ENCODE measurements at regions of chr19 and their contacts with region 1.

Region 1: GRCh38 chr19:47514869-47515588 is at the start of gene NAPA:
- DNase-seq: peak; percentile 100
- ATAC-seq: peak; percentile 92 to 96 (median 94)
- H3K4me3 ChIP-seq: peak within 1 kb of the TSS; percentile 95
- H3K27ac ChIP-seq: peak within 1 kb of the TSS; percentile 99
- H3K4me1 ChIP-seq: peaks cover 36% of the 10 kb centered on the region
- H3K27me3 ChIP-seq: no peaks in the 10 kb centered on the region
- CTCF ChIP-seq: no peak
- total RNA-seq, gene NAPA: 124 to 182 (median 159) TPM

Region 2: GRCh38 chr19:47391510-47392223 is 123.4 kb before region 1 on chr19:
- intact Hi-C with region 1: no loop called
- DNase-seq: peak; percentile 73 to 81
- ATAC-seq: peak; percentile 67 to 71 (median 68)
- H3K4me3 ChIP-seq: no peak overlapping the region
- H3K27ac ChIP-seq: no peak overlapping the region
- H3K4me1 ChIP-seq: no peaks in the 10 kb centered on the region
- H3K27me3 ChIP-seq: peaks cover 0 to 4% (median 1%) of the 10 kb centered on the region in 3 donors
- CTCF ChIP-seq: peak; percentile 82

Region 3: DNA sequence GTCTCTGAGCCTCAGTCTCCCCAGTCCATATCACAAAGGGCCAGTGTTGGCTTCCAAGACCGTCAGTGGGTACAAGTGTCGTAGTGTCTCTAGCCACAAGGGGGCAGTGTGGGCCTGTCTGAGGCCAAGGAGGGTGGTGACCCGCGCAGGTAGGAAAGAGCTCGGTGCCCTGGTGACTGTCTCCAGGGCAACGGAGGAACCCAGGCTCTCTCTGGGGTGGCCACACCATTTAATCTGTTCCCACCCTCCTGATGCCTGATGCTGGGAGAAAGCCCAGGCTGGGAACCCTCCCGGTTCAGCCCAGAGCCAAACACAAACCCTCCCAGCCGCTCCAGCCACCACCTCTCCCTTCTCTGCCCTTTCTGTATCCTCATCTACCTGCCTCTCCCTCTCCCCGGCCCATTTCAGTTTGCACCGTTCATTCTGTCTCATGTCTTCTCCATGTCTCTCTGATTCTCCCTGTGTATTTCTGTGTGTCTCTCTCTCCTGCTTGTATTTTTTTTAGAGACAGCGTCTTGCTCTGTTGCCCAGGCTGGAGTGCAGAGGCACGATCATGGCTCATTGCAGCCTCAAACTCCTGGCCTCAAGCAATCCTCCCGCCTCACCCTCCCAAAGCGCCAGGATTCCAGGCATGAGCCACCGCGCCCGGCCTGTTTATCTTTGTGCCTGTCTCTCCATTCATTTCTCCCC is 78.2 kb before region 1 on chr19:
- intact Hi-C with region 1: loop called (anchors 1 to 2 kb)
- DNase-seq: peak; percentile 77 to 87
- ATAC-seq: peak; percentile 91 to 100 (median 99)
- H3K4me3 ChIP-seq: no peak overlapping the region
- H3K27ac ChIP-seq: no peak overlapping the region
- H3K4me1 ChIP-seq: no peaks in the 10 kb centered on the region
- H3K27me3 ChIP-seq: peaks cover 0 to 57% (median under 1%) of the 10 kb centered on the region in 3 donors
- CTCF ChIP-seq: peak; percentile 90

Region 4: GRCh38 chr19:47561440-47562057 is 46.5 kb after region 1 on chr19:
- intact Hi-C with region 1: no loop called
- DNase-seq: no peak
- ATAC-seq: no peak
- H3K4me3 ChIP-seq: no peak overlapping the region
- H3K27ac ChIP-seq: no peak overlapping the region
- H3K4me1 ChIP-seq: no peaks in the 10 kb centered on the region
- H3K27me3 ChIP-seq: peaks cover 0 to 3% (median 0%) of the 10 kb centered on the region in 3 donors
- CTCF ChIP-seq: no peak

Region 5: DNA sequence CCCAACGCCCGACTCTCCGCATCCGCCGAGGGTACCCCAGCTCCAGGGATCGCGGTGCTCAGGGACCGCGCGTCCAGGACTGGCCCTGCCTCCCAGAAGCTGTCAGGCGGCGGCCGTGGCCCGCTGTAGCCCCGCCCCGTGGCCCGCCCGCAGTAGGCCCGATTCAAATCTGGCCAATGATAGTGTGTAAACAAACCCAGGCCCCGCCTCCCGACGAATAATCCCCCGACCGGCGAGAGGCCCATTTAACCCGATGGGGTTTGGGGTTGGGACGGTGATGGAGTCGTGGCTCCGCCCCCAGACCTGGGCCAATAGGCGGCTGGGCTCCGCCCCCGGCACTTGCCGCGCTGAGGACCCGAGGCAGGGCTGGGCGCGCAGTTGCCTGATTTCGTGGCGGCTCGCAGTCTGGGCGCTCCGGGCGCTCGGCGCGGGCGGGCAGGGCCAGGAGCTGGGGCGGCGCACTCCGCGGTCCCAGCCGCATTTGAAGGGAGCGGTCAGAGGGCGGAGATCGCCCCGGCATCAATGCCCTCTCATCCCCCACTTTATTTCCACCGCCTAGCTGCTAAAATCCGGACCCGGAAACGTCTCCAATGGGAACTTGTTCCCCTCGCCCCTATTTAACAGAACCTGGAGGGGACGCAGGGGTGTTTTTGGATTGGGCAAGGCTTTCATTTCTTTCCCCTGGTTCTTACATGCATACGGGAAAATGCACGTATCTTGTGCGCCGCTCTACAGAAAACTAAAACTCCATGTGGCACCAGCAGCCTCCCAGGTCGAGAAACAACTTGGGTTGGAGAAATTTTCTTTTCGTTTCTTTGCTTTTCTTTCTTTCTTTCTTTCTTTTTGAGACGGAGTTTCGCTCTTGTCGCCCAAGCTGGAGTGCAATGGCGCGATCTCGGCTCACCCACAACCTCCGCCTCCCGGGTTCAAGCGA is 85.5 kb after region 1 on chr19:
- intact Hi-C with region 1: loop called (anchors 2 to 5 kb)
- DNase-seq: peak; percentile 100
- ATAC-seq: peak; percentile 95 to 98 (median 96)
- H3K4me3 ChIP-seq: peak overlapping the region; percentile 76
- H3K27ac ChIP-seq: peak overlapping the region; percentile 88
- H3K4me1 ChIP-seq: peaks cover 16% of the 10 kb centered on the region
- H3K27me3 ChIP-seq: no peaks in the 10 kb centered on the region
- CTCF ChIP-seq: no peak

Region 6: DNA sequence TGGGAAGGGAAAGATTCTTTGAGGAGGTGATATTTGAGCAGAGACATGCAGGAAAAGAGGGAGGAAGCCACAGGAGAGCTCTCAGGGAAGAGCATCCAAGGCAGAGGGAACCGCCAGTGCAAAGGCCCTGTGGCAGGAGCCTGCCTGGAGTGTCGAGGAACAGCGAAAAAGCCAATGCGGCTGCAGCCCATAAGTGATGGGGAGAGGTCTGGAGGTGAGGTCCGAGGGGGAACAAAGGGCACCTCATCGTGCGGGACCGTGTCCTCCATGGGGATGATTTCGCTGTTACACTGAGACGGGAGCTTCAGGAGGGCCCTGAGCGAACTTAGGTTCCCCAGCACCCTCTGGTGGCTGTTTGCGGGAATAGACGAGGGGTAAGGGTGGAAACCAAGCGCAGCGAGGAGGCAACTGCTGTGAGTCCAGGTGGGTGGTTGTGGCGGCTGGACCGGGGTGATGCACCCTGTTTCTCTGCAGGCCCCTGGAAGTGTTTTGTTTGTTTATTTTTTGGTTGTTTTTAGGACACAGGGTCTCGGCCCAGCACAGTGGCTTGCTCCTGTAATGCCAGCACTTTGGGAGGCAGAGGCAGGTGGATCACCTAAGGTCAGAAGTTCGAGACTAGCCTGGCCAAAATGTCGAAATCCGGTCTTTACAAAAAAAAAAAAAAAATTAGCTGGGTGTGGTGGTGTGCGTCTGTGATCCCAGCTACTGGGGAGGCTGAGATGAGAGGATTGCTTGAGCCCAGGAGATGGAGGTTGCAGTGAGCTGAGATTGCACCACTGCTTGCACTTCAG is 192.3 kb after region 1 on chr19:
- intact Hi-C with region 1: loop called in 1 of 2 experiments (anchors 10 kb)
- DNase-seq: peak; percentile 76 to 84
- ATAC-seq: peak; percentile 74 to 88 (median 85)
- H3K4me3 ChIP-seq: no peak overlapping the region
- H3K27ac ChIP-seq: no peak overlapping the region
- H3K4me1 ChIP-seq: no peaks in the 10 kb centered on the region
- H3K27me3 ChIP-seq: peaks cover 0 to 7% (median 0%) of the 10 kb centered on the region in 3 donors
- CTCF ChIP-seq: peak; percentile 67